ENCODE measurements at regions of chr1 and their contacts with region 1.

Region 1: GRCh38 chr1:150363426-150364230 is at the start of gene RPRD2:
- DNase-seq: peak; percentile 94 to 100 (median 100)
- ATAC-seq: peak; percentile 89 to 92
- H3K4me3 Mint-ChIP-seq: peak within 1 kb of the TSS; percentile 86 to 100 (median 98)
- H3K27ac Mint-ChIP-seq: peak within 1 kb of the TSS; percentile 95 to 100 (median 98)
- H3K4me1 Mint-ChIP-seq: peaks cover 16 to 34% (median 31%) of the 10 kb centered on the region in 4 donors
- H3K27me3 Mint-ChIP-seq: no peaks in the 10 kb centered on the region
- polyA plus RNA-seq, gene RPRD2: 22.5 to 40.5 (median 31.6) TPM

Region 2: GRCh38 chr1:150268705-150269403 is 94.8 kb before region 1 on chr1 and contains the start of gene APH1A:
- POLR2A ChIA-PET with region 1: interaction called, 12 read pairs
- DNase-seq: peak; percentile 73 to 97 (median 89)
- ATAC-seq: peak; percentile 91 to 96
- H3K4me3 Mint-ChIP-seq: peak within 1 kb of the TSS; percentile 83 to 99 (median 98)
- H3K27ac Mint-ChIP-seq: peak within 1 kb of the TSS; percentile 91 to 99 (median 98)
- H3K4me1 Mint-ChIP-seq: peaks cover 22 to 40% (median 31%) of the 10 kb centered on the region in 4 donors
- H3K27me3 Mint-ChIP-seq: no peaks in the 10 kb centered on the region
- polyA plus RNA-seq, gene APH1A: 58.2 to 84.8 (median 67.1) TPM

Region 3: DNA sequence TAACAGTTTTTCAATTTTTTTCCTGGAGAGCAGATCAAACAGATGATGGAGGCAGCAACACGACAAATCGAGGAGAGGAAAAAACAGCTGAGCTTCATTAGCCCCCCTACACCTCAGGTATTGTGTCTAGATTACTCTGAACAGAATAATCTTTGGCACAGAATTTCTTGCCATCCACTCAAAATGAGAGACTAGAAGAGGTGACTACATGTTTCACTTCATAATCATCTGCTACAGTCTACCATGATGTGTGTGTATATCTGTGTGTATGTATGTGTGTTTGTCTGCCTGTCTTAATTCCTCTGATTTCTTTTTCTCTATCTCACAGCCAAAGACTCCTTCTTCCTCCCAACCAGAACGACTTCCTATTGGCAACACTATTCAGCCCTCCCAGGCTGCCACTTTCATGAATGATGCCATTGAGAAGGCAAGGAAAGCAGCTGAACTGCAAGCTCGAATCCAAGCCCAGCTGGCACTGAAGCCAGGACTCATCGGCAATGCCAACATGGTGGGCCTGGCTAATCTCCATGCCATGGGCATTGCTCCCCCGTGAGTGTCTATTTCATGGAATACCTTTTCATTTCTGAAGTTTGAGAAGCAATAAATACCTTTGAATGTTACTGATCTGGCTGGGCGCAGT is 30.9 kb before region 1 on chr1:
- POLR2A ChIA-PET with region 1: interaction called, 13 read pairs
- DNase-seq: no peak
- ATAC-seq: no peak
- H3K4me3 Mint-ChIP-seq: no peak overlapping the region
- H3K27ac Mint-ChIP-seq: peak overlapping the region in 3 of 10 donors; percentile 31 to 68 (median 40)
- H3K4me1 Mint-ChIP-seq: peaks cover 5 to 13% (median 7%) of the 10 kb centered on the region in 4 donors
- H3K27me3 Mint-ChIP-seq: no peaks in the 10 kb centered on the region

Region 4: GRCh38 chr1:150486964-150487762 is 123.5 kb after region 1 on chr1 and contains the start of gene TARS2:
- POLR2A ChIA-PET with region 1: interaction called, 17 read pairs
- DNase-seq: peak; percentile 76 to 99 (median 96)
- ATAC-seq: peak; percentile 100
- H3K4me3 Mint-ChIP-seq: peak within 1 kb of the TSS; percentile 90 to 100 (median 100)
- H3K27ac Mint-ChIP-seq: peak within 1 kb of the TSS; percentile 96 to 100 (median 99)
- H3K4me1 Mint-ChIP-seq: peaks cover 8 to 23% (median 20%) of the 10 kb centered on the region in 4 donors
- H3K27me3 Mint-ChIP-seq: no peaks in the 10 kb centered on the region
- polyA plus RNA-seq, gene TARS2: 23.9 to 37.2 (median 30.6) TPM

Region 5: DNA sequence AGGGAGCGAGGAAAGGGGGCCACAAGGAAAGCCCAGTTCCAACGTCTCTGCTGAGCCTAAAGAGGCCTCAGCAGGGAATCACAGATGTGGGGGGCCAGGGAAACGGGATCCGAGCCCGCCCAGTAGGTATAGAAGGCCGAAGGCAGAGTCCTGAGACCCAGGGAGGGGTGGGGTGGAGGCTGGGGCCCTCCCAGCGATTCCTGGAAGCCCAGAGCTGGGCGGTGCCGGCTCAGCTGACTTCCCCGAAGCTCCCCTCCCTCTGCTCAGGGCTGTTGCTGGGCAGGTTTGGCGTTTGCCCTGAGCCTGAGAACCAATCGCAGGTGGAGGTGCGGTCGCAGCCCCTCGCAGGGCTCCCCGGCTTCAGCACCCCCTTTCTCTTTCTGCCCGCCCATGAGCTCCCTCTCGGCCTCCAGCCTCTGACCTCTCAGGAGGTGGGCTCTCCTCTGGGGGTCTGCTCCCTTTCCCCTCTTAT is 198.4 kb after region 1 on chr1:
- POLR2A ChIA-PET with region 1: interaction called, 21 read pairs
- DNase-seq: peak; percentile 71 to 87 (median 82)
- ATAC-seq: peak; percentile 24 to 48
- H3K4me3 Mint-ChIP-seq: peak overlapping the region; percentile 92 to 100 (median 96)
- H3K27ac Mint-ChIP-seq: peak overlapping the region; percentile 97 to 100 (median 99)
- H3K4me1 Mint-ChIP-seq: peaks cover 28 to 62% (median 58%) of the 10 kb centered on the region in 4 donors
- H3K27me3 Mint-ChIP-seq: no peaks in the 10 kb centered on the region

Region 6: DNA sequence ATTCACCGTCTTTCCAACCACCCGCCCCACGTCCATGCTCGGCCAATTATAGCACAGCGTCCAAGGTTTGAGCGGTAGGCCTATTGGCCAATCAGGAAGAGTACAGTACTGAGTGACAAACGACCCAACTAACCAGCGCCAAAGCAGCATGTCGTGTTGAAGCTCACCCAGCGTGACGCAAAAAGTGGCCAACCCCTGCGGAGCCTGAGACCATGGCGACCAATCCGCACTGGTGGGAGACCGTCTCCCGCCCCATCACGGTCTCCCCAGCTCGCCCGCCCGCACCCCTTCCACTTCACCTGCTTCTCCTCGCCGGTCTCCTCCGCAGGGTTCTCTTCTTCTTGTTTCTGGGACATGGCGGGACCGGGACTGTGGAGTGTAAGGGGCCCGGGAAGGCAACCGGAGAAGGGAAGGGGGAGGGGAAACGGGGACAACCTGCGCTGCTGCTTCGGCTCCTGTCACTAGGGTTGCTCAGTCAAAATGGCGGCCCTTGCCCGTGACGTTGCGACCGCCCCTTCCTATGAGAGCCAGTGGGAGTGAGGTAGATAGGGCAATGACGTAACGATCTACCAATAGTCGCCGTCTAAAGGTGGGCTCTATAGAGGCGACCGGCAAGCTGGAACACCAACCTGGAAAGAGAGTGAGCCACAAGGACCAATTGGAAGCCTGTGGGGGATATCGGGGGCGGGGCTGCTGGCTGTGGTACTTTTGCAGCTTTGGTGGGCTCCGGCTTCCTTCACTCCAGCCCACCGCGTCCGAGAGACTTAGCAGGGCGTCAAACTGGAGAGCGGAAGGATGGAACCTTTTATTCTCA is 265.7 kb after region 1 on chr1 and contains the start of gene ENSA:
- POLR2A ChIA-PET with region 1: interaction called, 13 read pairs
- DNase-seq: peak; percentile 86 to 99 (median 96)
- ATAC-seq: peak; percentile 86 to 88
- H3K4me3 Mint-ChIP-seq: no peak within 1 kb of the TSS
- H3K27ac Mint-ChIP-seq: no peak within 1 kb of the TSS
- H3K4me1 Mint-ChIP-seq: peaks cover 12 to 20% (median 18%) of the 10 kb centered on the region in 4 donors
- H3K27me3 Mint-ChIP-seq: no peaks in the 10 kb centered on the region
- polyA plus RNA-seq, gene ENSA: 55.2 to 64.4 (median 63.7) TPM